Naive thymus-derived CD8-positive, alpha-beta T cell (primary cell): ENCODE measurements at regions of chr5 and their contacts with region 1.

Region 1: GRCh38 chr5:157219491-157220271 is 39.0 kb downstream of the ITK start:
- DNase-seq: no peak
- ATAC-seq: no peak
- H3K4me3 Mint-ChIP-seq: peak overlapping the region in 9 of 10 donors; percentile 27 to 77 (median 46)
- H3K27ac Mint-ChIP-seq: peak overlapping the region; percentile 81 to 98 (median 90)
- H3K4me1 Mint-ChIP-seq: peaks cover 53 to 88% (median 84%) of the 10 kb centered on the region in 4 donors
- H3K27me3 Mint-ChIP-seq: no peaks in the 10 kb centered on the region

Region 2: GRCh38 chr5:157157293-157157891 is 62.3 kb before region 1 on chr5:
- POLR2A ChIA-PET with region 1: interaction called, 13 read pairs
- DNase-seq: no peak
- ATAC-seq: no peak
- H3K4me3 Mint-ChIP-seq: peak overlapping the region in 1 of 10 donors; percentile 16
- H3K27ac Mint-ChIP-seq: peak overlapping the region in 4 of 10 donors; percentile 16 to 87 (median 74)
- H3K4me1 Mint-ChIP-seq: peaks cover 40 to 73% (median 67%) of the 10 kb centered on the region in 4 donors
- H3K27me3 Mint-ChIP-seq: no peaks in the 10 kb centered on the region

Region 3: DNA sequence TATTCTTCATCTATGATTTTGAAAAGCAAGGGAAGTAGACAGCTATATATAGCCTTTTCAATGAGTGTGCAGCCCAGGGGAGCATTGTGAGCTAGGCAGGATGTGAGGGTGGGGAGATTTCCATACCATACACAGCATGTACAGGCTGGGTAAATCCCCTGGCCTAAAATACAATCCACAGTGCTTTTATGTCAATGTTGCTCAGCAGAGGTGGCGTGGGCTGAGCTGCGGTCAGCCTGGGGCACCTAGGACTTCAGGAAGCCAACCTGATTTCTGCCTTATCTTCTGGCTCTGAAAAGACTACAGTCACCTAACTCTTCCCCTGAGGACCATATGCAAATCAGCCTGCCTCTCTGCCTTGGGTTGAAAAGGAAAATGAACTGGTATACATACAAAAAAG is 47.3 kb before region 1 on chr5:
- POLR2A ChIA-PET with region 1: interaction called, 990 read pairs
- DNase-seq: peak; percentile 39 to 84 (median 74)
- ATAC-seq: peak; percentile 96 to 98
- H3K4me3 Mint-ChIP-seq: peak overlapping the region; percentile 54 to 76 (median 73)
- H3K27ac Mint-ChIP-seq: peak overlapping the region; percentile 47 to 96 (median 86)
- H3K4me1 Mint-ChIP-seq: peaks cover 23 to 66% (median 60%) of the 10 kb centered on the region in 4 donors
- H3K27me3 Mint-ChIP-seq: no peaks in the 10 kb centered on the region

Region 4: GRCh38 chr5:157204765-157205164 is 14.9 kb before region 1 on chr5:
- POLR2A ChIA-PET with region 1: interaction called, 990 read pairs
- DNase-seq: peak in 4 of 10 donors; percentile 41 to 74 (median 58)
- ATAC-seq: peak; percentile 61 to 76
- H3K4me3 Mint-ChIP-seq: peak overlapping the region; percentile 62 to 82 (median 68)
- H3K27ac Mint-ChIP-seq: peak overlapping the region; percentile 86 to 98 (median 93)
- H3K4me1 Mint-ChIP-seq: peaks cover 37 to 92% (median 83%) of the 10 kb centered on the region in 4 donors
- H3K27me3 Mint-ChIP-seq: no peaks in the 10 kb centered on the region